Heart right ventricle (tissue), 16 donors: ENCODE measurements at regions of chr4 and their contacts with region 1.

Region 1: DNA sequence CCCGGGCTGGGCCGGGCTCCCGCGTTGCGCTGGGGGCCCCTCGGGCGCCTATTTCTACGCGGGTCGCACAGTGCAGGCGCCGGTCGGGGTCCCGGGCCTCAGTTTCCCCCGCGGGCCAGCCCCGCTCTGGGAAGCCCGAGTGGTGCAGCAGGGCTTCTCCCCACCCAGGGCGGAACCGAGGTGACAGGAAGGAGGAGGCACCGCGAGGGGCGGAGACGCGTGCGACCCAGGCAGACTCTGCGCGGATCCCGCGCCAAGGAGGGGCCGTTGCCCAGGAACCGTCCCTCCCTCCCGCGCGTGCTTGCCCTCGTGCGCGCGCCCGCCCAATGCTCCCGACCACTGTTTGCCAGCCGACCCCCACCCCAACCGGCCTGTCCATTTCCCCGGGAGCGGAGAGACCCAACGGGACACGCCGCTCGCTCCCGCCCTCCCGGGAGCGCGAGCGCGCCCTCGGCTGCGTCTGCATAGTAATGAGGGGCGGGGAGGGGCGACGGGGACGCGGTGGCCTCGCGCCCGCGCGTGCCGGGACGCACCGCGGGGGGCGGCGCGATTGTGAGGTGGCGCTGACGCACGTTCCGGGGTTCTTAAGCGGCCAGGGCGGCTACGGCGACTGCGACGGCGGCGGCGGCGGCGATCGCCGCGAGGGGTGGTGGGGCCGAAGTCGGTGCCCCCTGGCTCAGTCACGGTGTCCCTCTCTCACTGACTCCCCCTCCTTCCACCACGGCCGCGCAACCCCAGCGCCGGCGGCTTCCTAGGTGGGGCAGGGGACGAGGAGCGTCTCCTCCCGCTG is at the start of gene CPEB2:
- DNase-seq: peak; percentile 95 to 96
- ATAC-seq: peak; percentile 87 to 94 (median 89)
- H3K4me3 ChIP-seq: peak within 1 kb of the TSS; percentile 75 to 99 (median 96)
- H3K27ac ChIP-seq: peak within 1 kb of the TSS; percentile 96 to 100 (median 100)
- H3K4me1 ChIP-seq: peaks cover 0 to 29% (median 22%) of the 10 kb centered on the region in 9 donors
- H3K27me3 ChIP-seq: no peaks in the 10 kb centered on the region
- CTCF ChIP-seq: peak in 1 of 9 donors; percentile 8
- total RNA-seq, gene CPEB2: 11.6 to 31.8 (median 21.9) TPM

Region 2: DNA sequence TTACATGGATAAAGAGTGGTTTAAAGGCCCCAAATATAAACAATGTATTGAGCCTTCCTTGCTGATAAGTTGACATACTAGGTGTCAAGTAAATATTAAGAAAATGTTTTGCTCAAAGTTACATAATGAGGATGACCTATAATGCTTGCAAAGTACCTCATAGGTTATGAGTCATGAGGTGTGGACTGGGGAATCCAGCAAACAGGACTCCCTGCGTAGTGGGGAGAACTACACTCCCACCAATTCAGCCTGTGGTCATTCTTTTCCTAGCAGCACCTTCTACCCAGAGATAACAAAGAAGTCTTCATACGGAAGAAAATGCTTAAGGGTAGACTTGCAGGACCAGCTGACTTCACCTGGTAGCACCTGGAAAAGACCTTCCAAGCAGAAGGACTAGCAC is 418.7 kb before region 1 on chr4:
- intact Hi-C with region 1: no loop called
- DNase-seq: no peak
- ATAC-seq: no peak
- H3K4me3 ChIP-seq: no peak overlapping the region
- H3K27ac ChIP-seq: no peak overlapping the region
- H3K4me1 ChIP-seq: peaks cover 0 to 6% (median 0%) of the 10 kb centered on the region in 9 donors
- H3K27me3 ChIP-seq: no peaks in the 10 kb centered on the region
- CTCF ChIP-seq: no peak

Region 3: DNA sequence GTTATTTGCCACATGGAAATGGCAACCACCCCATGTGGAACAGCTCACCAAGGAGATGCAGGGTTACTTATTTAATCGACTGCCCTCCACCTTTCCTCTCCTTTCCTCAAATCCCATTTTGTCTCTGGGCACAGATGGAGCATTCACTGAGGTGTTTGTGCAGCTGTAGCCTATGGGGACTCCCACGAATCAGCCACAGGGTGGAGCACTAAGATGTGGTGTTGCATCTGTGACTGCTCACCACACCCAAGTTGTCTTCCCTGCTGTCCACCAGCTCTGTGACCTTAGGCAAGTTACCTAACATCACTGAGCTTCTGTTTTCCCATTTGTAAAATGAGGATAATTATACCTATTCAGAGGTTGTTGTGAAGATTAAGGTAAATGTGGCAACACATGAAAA is 252.2 kb before region 1 on chr4:
- intact Hi-C with region 1: loop called in 1 of 10 experiments (anchors 10 kb)
- DNase-seq: peak; percentile 21 to 42
- ATAC-seq: peak; percentile 71 to 90 (median 84)
- H3K4me3 ChIP-seq: no peak overlapping the region
- H3K27ac ChIP-seq: no peak overlapping the region
- H3K4me1 ChIP-seq: peaks cover 0 to 5% (median 0%) of the 10 kb centered on the region in 9 donors
- H3K27me3 ChIP-seq: no peaks in the 10 kb centered on the region
- CTCF ChIP-seq: peak in 8 of 9 donors; percentile 19 to 69 (median 56)

Region 4: GRCh38 chr4:14862891-14863290 is 139.2 kb before region 1 on chr4:
- intact Hi-C with region 1: loop called in 1 of 10 experiments (anchors 10 kb)
- DNase-seq: peak; percentile 21 to 35
- ATAC-seq: peak; percentile 42 to 74 (median 64)
- H3K4me3 ChIP-seq: peak overlapping the region in 7 of 10 donors; percentile 6 to 37 (median 32)
- H3K27ac ChIP-seq: no peak overlapping the region
- H3K4me1 ChIP-seq: peaks cover 0 to 31% (median 9%) of the 10 kb centered on the region in 9 donors
- H3K27me3 ChIP-seq: peaks cover 0 to 22% (median 0%) of the 10 kb centered on the region in 7 donors
- CTCF ChIP-seq: no peak

Region 5: GRCh38 chr4:15149839-15150476 is 147.9 kb after region 1 on chr4:
- intact Hi-C with region 1: loop called in 6 of 10 experiments (anchors 5 to 10 kb)
- DNase-seq: peak; percentile 78 to 85
- ATAC-seq: peak; percentile 92 to 96 (median 94)
- H3K4me3 ChIP-seq: no peak overlapping the region
- H3K27ac ChIP-seq: peak overlapping the region in 9 of 10 donors; percentile 22 to 65 (median 57)
- H3K4me1 ChIP-seq: peaks cover 6 to 49% (median 28%) of the 10 kb centered on the region in 9 donors
- H3K27me3 ChIP-seq: no peaks in the 10 kb centered on the region
- CTCF ChIP-seq: peak in 4 of 9 donors; percentile 25 to 39 (median 36)

Region 6: DNA sequence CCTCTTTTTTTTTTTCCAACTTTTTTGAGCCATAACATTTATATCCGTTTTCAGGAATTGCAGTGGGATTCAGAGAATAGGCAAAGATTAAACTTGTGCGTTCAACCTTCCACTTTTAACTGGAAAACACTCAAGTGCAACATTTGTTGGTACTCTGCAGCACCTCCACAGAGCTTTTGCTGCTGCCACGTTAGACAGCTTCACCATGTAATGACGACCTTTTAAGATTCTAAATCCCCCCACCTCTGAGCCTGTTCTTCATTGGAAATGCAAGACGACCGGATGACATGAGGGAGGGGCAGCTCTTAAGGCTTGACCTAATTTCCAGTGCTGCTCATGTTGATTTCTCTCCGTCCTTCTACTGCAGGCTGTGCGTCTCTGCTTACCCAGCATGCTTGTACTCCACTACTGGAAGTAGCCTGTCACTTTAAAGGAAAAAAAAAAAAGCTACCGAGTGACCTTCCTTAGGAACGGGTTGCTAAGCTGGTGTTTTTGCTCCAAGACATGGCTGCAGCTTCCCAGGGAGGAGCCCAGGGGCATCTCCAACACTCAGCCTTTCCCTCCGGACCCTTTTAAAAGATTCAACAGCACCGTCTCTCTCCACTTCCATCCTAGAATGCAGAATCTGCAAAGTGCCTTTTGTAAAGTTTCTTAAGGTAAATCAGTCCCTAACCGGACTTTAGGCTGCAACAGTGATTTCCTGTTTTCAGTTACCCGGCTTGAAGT is 467.5 kb after region 1 on chr4 and contains the start of gene CC2D2A:
- intact Hi-C with region 1: loop called in 1 of 10 experiments (anchors 10 kb)
- DNase-seq: no peak
- ATAC-seq: peak; percentile 89 to 95 (median 92)
- H3K4me3 ChIP-seq: peak within 1 kb of the TSS; percentile 42 to 70 (median 61)
- H3K27ac ChIP-seq: peak within 1 kb of the TSS in 9 of 10 donors; percentile 3 to 75 (median 50)
- H3K4me1 ChIP-seq: peaks cover 0 to 41% (median 21%) of the 10 kb centered on the region in 9 donors
- H3K27me3 ChIP-seq: no peaks in the 10 kb centered on the region
- CTCF ChIP-seq: no peak
- total RNA-seq, gene CC2D2A: 4.0 to 10.8 (median 8.3) TPM